Vagina (tissue), 2 donors: ENCODE measurements at regions of chr7 and their contacts with region 1.

Region 1: DNA sequence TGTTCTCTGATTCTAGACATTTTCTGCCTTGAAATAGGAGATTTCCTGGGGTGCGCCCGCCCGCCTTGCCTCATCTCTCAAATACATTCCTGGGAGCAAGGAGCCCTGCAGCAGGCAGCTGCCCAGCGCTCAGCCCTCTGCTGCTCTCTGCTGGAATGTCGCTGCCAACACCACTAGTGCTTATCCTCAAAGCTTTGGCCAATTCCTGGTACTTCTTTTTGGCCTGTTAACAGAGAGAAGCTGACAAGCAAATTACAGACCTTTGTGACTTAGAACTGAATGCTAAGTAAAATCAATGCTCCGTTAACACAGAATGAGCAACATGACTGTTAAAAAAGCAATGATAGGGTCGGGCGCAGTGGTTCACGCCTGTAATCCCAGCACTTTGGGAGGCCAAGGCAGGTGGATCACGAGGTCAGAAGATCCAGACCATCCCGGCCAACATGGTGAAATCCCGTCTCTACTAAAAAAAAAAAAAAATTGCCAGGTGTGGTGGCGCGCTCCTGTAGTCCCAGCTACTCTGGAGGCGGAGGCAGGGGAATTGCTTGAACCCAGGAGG is 41.9 kb upstream of the SYPL1 start:
- DNase-seq: no peak
- H3K4me3 ChIP-seq: no peak overlapping the region
- H3K27ac ChIP-seq: no peak overlapping the region
- H3K4me1 ChIP-seq: peaks cover 22% of the 10 kb centered on the region
- H3K27me3 ChIP-seq: no peaks in the 10 kb centered on the region
- CTCF ChIP-seq: peak; percentile 91 to 96 (median 94)
- POLR2A ChIP-seq: no peak

Region 2: GRCh38 chr7:105743351-105744090 is 410.4 kb before region 1 on chr7:
- intact Hi-C with region 1: loop called (anchors 10 kb)
- DNase-seq: no peak
- H3K4me3 ChIP-seq: no peak overlapping the region
- H3K27ac ChIP-seq: no peak overlapping the region
- H3K4me1 ChIP-seq: no peaks in the 10 kb centered on the region
- H3K27me3 ChIP-seq: no peaks in the 10 kb centered on the region
- CTCF ChIP-seq: no peak
- POLR2A ChIP-seq: no peak

Region 3: GRCh38 chr7:106056513-106057203 is 97.3 kb before region 1 on chr7:
- intact Hi-C with region 1: loop called (anchors 5 kb)
- DNase-seq: no peak
- H3K4me3 ChIP-seq: no peak overlapping the region
- H3K27ac ChIP-seq: no peak overlapping the region
- H3K4me1 ChIP-seq: peaks cover 17% of the 10 kb centered on the region
- H3K27me3 ChIP-seq: no peaks in the 10 kb centered on the region
- CTCF ChIP-seq: peak; percentile 66 to 86 (median 70)
- POLR2A ChIP-seq: no peak